ENCODE measurements at regions of chr1 and their contacts with region 1.

Region 1: DNA sequence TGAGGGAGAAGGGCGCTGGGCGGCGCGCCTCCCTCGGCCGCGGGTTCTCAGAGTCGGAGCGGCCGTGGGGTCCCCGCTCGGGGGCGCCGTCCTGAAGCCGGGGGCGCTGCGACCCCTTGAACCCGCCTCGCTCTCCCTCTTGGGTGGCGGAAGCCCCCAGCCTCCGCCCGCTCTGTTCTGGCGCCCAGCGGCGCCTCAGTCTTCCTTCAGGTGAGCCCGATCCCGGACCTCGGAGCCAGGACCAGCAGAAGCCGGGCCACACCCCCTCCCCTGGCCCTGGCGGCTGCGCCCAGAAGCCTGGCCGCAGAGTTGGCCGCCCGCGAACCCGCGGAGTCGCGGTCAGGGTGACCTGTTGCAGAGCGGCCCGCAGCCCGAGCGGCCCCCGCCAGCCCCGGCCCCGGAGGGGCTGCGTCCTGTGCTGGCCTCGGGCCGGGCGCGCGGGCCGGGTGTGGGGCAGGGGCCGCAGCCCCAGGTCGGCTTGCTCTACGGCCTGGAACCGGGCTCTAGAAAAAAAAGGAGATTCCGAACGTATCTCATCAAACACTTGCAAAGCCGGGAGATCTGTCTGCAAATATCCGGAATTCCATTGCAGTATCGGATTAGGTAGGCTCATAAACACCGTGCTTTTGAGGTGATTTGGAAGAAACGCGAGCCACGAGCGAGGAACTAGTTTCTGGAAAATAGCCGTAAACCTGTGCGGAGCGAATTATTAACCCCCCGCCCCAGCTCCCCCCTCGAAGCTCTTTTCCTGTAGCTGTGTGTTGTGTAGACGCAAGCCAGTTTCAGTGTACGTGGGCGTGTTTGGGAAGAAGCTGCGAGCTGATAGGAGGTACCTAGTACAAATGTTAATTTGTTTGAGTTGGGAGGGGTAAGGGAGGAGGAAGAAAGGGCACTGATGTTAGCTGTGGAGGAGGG is 816 bp downstream of the RALGPS2 start:
- DNase-seq: peak; percentile 83
- H3K4me3 ChIP-seq: peak overlapping the region; percentile 68 to 99 (median 88)
- H3K27ac ChIP-seq: peak overlapping the region; percentile 81 to 90 (median 88)
- H3K4me1 ChIP-seq: peaks cover 0 to 14% (median 2%) of the 10 kb centered on the region in 4 donors
- H3K27me3 ChIP-seq: no peaks in the 10 kb centered on the region
- CTCF ChIP-seq: no peak
- EP300 ChIP-seq: no peak
- POLR2A ChIP-seq: no peak

Region 2: GRCh38 chr1:178542560-178543356 is 183.1 kb before region 1 on chr1:
- intact Hi-C with region 1: loop called (anchors 2 kb)
- DNase-seq: peak; percentile 94
- H3K4me3 ChIP-seq: peak overlapping the region; percentile 63 to 90 (median 66)
- H3K27ac ChIP-seq: peak overlapping the region; percentile 81 to 87 (median 82)
- H3K4me1 ChIP-seq: peaks cover 0 to 43% (median 35%) of the 10 kb centered on the region in 4 donors
- H3K27me3 ChIP-seq: no peaks in the 10 kb centered on the region
- CTCF ChIP-seq: peak; percentile 97 to 99 (median 98)
- EP300 ChIP-seq: peak in 1 of 4 donors; percentile 25
- POLR2A ChIP-seq: no peak

Measured in sigmoid colon (tissue), 7 donors.